Calu3 (cell line): ENCODE measurements at regions of chr6 and their contacts with region 1.

Region 1: DNA sequence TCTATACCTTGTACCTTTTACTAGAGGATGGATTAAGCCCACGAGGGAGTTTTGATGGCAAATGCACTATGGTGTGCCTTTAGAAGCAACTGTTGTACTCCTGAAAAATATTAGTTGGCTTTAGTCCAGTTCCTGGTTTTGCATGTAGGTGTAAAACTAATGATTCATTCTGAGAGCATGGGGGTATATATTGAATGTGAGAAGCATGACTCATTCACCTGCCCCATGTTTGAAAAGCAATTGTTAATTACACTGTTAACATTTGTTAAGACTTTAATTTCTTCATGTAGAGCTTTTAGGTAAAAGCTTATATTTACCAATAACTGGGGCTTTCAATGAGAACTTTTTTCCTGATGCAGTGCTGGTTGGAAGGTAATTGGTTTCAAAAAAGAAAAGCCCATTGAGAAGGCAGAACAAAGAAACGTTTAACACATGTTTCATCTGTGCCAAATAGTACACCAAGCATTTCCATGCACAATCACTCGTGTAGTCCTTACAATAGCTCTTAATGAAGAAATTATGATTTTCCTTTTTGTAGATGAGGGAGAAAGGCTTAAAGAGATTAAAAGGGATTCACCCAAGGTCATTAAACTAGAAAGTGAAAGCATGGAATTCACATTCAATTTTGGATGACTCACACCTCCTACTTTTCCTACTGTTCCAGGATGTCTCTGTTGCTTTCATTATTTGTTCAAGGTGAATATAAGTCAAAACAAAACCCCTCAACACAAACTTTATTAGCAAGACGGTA is 134.1 kb downstream of the CCDC170 start:
- DNase-seq: peak; percentile 4
- H3K4me3 Mint-ChIP-seq: peak overlapping the region; percentile 19
- H3K27ac Mint-ChIP-seq: peak overlapping the region; percentile 75
- H3K4me1 Mint-ChIP-seq: peaks cover 34% of the 10 kb centered on the region
- H3K27me3 Mint-ChIP-seq: no peaks in the 10 kb centered on the region
- CTCF ChIP-seq: no peak

Region 2: DNA sequence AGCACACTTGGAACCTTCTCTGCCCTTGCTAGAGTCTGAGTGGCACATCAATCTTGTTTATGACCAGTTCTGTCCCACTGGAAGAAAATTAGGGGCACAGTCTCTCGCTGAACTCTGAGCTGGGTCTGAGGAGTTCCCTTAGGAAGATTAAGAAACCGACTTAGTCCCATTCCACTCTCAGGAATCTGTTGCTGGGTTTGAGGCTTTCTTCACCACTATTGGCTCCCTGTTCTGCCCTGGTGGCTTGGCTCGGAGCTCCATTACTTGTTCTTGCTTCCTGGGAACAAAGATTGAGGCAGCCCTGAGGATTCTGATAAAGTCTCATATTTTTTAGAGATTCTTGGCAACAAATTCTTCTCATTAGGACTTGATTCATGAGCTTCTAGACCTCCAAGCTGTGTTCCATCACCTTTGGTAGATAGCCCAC is 18.3 kb before region 1 on chr6:
- CTCF ChIA-PET with region 1: no interaction called
- intact Hi-C with region 1: no loop called
- DNase-seq: no peak
- H3K4me3 Mint-ChIP-seq: no peak overlapping the region
- H3K27ac Mint-ChIP-seq: no peak overlapping the region
- H3K4me1 Mint-ChIP-seq: no peaks in the 10 kb centered on the region
- H3K27me3 Mint-ChIP-seq: no peaks in the 10 kb centered on the region
- CTCF ChIP-seq: no peak

Region 3: GRCh38 chr6:151669196-151669688 is 41.4 kb after region 1 on chr6:
- CTCF ChIA-PET with region 1: no interaction called
- intact Hi-C with region 1: loop called (anchors 2 kb)
- DNase-seq: no peak
- H3K4me3 Mint-ChIP-seq: peak overlapping the region; percentile 55
- H3K27ac Mint-ChIP-seq: peak overlapping the region; percentile 95
- H3K4me1 Mint-ChIP-seq: peaks cover 33% of the 10 kb centered on the region
- H3K27me3 Mint-ChIP-seq: no peaks in the 10 kb centered on the region
- CTCF ChIP-seq: no peak